ENCODE measurements at regions of chr2 and their contacts with region 1.

Region 1: GRCh38 chr2:241686649-241687425 is at the start of gene DTYMK:
- DNase-seq: peak; percentile 99
- ATAC-seq: peak; percentile 99
- total RNA-seq, gene DTYMK: 11.1 TPM

Region 2: GRCh38 chr2:241609859-241610793 is 76.7 kb before region 1 on chr2:
- intact Hi-C with region 1: loop called (anchors 2 kb)
- DNase-seq: peak; percentile 91
- ATAC-seq: peak; percentile 89

Region 3: GRCh38 chr2:241637000-241637791 is 49.6 kb before region 1 on chr2 and contains the starts of genes ATG4B and THAP4:
- intact Hi-C with region 1: loop called (anchors 1 kb)
- DNase-seq: peak; percentile 95
- ATAC-seq: peak; percentile 91
- total RNA-seq, gene ATG4B: 43.3 TPM
- total RNA-seq, gene THAP4: 83.2 TPM